Dendritic cell treated with granulocyte-macrophage colony-stimulating factor and Interleukin-4, amounts not matched to agents 40 ng/mL and 50 ng/mL, for 4 days (primary cell): ENCODE measurements at regions of chr18 and their contacts with region 1.

Region 1: GRCh38 chr18:3771121-3771971 is 321.4 kb downstream of the TGIF1 start:
- H3K4me3 Mint-ChIP-seq: peak overlapping the region; percentile 80
- H3K27ac Mint-ChIP-seq: peak overlapping the region; percentile 40
- H3K4me1 Mint-ChIP-seq: peaks cover 14% of the 10 kb centered on the region
- H3K27me3 Mint-ChIP-seq: peaks cover 5% of the 10 kb centered on the region

Region 2: DNA sequence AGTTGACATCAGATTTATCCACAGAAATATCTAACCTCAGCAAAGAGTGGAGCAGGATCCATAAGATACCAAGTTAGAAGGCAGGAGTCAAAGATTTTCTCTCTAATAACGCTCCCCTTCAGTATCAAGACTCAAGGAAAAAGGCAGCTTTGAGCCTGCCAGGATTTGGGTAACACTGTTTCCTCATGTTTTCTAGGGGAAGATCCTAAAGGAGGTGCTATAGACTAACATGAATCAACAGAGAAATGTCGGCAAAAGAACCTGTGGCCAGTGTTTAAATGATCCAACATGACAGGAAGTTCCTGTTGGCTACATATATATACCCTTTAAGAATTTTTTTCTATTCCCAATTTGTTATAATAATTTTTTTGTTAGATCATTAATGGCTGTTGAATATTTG is 81.0 kb after region 1 on chr18:
- intact Hi-C with region 1: no loop called
- H3K4me3 Mint-ChIP-seq: no peak overlapping the region
- H3K27ac Mint-ChIP-seq: no peak overlapping the region
- H3K4me1 Mint-ChIP-seq: no peaks in the 10 kb centered on the region
- H3K27me3 Mint-ChIP-seq: peaks cover under 1% of the 10 kb centered on the region

Region 3: GRCh38 chr18:3995476-3996102 is 224.2 kb after region 1 on chr18:
- intact Hi-C with region 1: loop called (anchors 1 kb)
- H3K4me3 Mint-ChIP-seq: no peak overlapping the region
- H3K27ac Mint-ChIP-seq: no peak overlapping the region
- H3K4me1 Mint-ChIP-seq: no peaks in the 10 kb centered on the region
- H3K27me3 Mint-ChIP-seq: peaks cover 2% of the 10 kb centered on the region

Region 4: DNA sequence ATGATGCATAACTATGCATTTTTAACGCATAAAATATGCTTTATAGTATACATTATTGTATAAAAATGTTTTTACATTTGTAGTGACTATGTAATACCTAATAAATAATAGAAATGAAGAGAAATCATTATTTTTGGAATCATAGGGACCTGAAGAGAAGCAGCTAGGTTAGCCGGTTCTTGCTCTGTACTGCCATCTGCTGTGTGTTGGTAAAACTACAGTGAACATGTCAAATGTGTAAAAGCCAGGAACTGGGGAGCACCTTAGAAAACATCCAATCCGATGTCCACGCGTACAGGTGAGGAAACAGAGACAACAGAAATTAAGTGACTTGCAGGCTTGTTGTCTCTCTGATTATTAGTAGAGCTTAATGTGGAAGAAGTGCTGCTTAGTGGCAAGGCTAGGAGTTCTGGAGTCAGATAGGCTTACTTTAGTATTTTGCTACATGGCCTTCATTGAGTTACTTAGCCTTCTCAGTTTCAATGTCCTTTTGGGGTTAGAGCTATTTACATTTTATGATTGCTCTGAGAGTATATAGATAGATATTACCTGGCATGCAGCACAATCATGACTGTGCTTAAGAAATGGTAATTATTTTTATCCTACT is 297.3 kb after region 1 on chr18:
- intact Hi-C with region 1: loop called (anchors 5 kb)
- H3K4me3 Mint-ChIP-seq: no peak overlapping the region
- H3K27ac Mint-ChIP-seq: no peak overlapping the region
- H3K4me1 Mint-ChIP-seq: no peaks in the 10 kb centered on the region
- H3K27me3 Mint-ChIP-seq: peaks cover 7% of the 10 kb centered on the region